ENCODE measurements at regions of chr21 and their contacts with region 1.

Region 1: GRCh38 chr21:44927587-44928461 is 7.1 kb upstream of the ITGB2 start:
- DNase-seq: peak; percentile 89
- H3K4me3 ChIP-seq: peak overlapping the region in 1 of 3 experiments; percentile 33
- H3K27ac ChIP-seq: peak overlapping the region; percentile 91
- H3K4me1 ChIP-seq: peaks cover 52% of the 10 kb centered on the region
- H3K27me3 ChIP-seq: no peaks in the 10 kb centered on the region
- CTCF ChIP-seq: peak in 1 of 2 donors; percentile 37

Region 2: GRCh38 chr21:44510508-44511210 is 417.2 kb before region 1 on chr21:
- CTCF ChIA-PET with region 1: no interaction called
- dilution Hi-C with region 1: no loop called
- in situ Hi-C with region 1: no loop called
- intact Hi-C with region 1: loop called (anchors 5 kb)
- DNase-seq: peak; percentile 56
- H3K4me3 ChIP-seq: peak overlapping the region in 2 of 3 experiments; percentile 37 to 46
- H3K27ac ChIP-seq: no peak overlapping the region
- H3K4me1 ChIP-seq: peaks cover 10% of the 10 kb centered on the region
- H3K27me3 ChIP-seq: peaks cover 2% of the 10 kb centered on the region
- CTCF ChIP-seq: peak; percentile 69 to 92

Region 3: DNA sequence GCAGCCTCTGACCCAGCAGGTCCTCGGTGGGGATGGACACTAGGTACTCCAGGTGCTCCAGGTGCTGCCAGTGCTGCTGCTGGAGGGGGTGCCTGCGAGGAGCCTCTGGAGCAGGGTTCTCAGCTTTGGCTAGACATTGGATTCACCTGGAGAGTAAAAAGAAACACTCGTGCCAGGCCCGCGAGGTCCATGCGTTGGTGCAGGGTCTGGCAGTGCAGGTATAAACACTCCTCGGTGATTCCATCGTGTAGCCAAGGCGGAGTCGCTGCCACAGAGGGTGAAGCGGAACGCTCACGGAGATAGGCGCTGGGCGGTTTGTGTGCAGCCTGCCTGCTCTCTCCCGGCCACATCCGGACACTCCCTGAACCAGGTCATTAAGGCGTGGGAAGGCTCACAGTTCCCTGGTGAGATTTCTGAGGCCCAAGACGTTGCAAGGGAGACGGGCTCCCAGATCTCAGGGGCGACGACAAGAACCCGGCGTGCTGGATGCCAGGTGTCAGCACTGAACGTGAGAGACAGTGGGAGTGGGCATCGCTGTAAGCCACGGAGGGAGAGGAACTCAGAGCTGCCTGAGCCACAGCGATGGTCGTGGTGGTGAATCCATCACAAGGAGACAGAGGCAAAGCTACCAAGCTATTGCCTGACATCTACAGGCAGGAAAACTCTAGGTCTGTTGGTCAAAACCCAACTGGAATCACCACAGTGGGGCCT is 92.7 kb before region 1 on chr21:
- CTCF ChIA-PET with region 1: no interaction called
- dilution Hi-C with region 1: no loop called
- in situ Hi-C with region 1: no loop called
- intact Hi-C with region 1: no loop called
- DNase-seq: no peak
- H3K4me3 ChIP-seq: no peak overlapping the region
- H3K27ac ChIP-seq: no peak overlapping the region
- H3K4me1 ChIP-seq: peaks cover 10% of the 10 kb centered on the region
- H3K27me3 ChIP-seq: no peaks in the 10 kb centered on the region
- CTCF ChIP-seq: no peak

Region 4: GRCh38 chr21:44873356-44874239 is 54.2 kb before region 1 on chr21 and contains the start of gene PTTG1IP:
- CTCF ChIA-PET with region 1: no interaction called
- dilution Hi-C with region 1: no loop called
- in situ Hi-C with region 1: no loop called
- intact Hi-C with region 1: loop called (anchors 2 kb)
- DNase-seq: peak; percentile 97
- H3K4me3 ChIP-seq: peak within 1 kb of the TSS; percentile 71 to 86 (median 75)
- H3K27ac ChIP-seq: peak within 1 kb of the TSS; percentile 72
- H3K4me1 ChIP-seq: peaks cover 54% of the 10 kb centered on the region
- H3K27me3 ChIP-seq: no peaks in the 10 kb centered on the region
- CTCF ChIP-seq: no peak
- total RNA-seq, gene PTTG1IP: 131 to 269 TPM

Region 5: DNA sequence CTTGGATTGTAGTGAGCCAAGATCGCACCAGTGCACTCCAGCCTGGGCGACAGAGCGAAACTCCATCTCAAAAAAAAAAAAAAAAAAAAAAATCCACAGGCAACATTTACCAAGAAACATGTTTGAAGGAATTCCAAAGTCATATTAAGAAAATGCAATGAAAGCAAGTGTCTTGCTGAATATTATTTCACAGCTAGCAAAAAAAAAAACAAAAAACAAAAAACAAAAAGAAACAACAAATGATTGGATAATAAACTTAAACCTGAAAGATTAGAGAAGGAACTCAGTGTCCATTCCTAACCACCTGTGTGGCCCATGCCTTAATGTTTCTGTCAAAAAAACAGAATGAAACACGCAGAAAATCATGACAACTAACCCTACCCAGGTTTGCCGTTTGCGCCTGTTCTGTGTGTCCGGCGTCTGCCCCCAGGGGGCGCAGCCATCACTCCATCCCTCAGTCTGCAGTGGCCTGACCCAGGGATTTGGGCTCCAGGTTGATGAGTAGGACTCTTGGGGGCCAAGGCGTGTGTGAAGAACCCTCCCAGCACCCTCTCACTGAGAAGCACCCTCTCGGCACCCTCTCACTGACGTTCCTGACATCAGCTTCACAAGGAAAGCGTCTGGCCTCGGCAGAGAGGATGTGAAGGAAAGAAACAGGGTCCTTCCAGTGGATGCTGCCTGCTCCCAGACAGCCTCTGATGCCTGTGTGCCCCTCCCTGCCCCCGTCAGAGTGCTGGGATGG is 35.1 kb before region 1 on chr21:
- CTCF ChIA-PET with region 1: interaction called, 4 read pairs
- dilution Hi-C with region 1: no loop called
- in situ Hi-C with region 1: no loop called
- intact Hi-C with region 1: loop called (anchors 1 kb)
- DNase-seq: peak; percentile 40
- H3K4me3 ChIP-seq: no peak overlapping the region
- H3K27ac ChIP-seq: no peak overlapping the region
- H3K4me1 ChIP-seq: peaks cover 10% of the 10 kb centered on the region
- H3K27me3 ChIP-seq: no peaks in the 10 kb centered on the region
- CTCF ChIP-seq: peak; percentile 91 to 95

Region 6: GRCh38 chr21:45534663-45535331 is 607.0 kb after region 1 on chr21:
- CTCF ChIA-PET with region 1: no interaction called
- dilution Hi-C with region 1: no loop called
- in situ Hi-C with region 1: no loop called
- intact Hi-C with region 1: no loop called
- DNase-seq: no peak
- H3K4me3 ChIP-seq: no peak overlapping the region
- H3K27ac ChIP-seq: no peak overlapping the region
- H3K4me1 ChIP-seq: no peaks in the 10 kb centered on the region
- H3K27me3 ChIP-seq: no peaks in the 10 kb centered on the region
- CTCF ChIP-seq: no peak

Measured in mammary epithelial cell (primary cell).